ENCODE measurements at regions of chr20 and their contacts with region 1.

Region 1: DNA sequence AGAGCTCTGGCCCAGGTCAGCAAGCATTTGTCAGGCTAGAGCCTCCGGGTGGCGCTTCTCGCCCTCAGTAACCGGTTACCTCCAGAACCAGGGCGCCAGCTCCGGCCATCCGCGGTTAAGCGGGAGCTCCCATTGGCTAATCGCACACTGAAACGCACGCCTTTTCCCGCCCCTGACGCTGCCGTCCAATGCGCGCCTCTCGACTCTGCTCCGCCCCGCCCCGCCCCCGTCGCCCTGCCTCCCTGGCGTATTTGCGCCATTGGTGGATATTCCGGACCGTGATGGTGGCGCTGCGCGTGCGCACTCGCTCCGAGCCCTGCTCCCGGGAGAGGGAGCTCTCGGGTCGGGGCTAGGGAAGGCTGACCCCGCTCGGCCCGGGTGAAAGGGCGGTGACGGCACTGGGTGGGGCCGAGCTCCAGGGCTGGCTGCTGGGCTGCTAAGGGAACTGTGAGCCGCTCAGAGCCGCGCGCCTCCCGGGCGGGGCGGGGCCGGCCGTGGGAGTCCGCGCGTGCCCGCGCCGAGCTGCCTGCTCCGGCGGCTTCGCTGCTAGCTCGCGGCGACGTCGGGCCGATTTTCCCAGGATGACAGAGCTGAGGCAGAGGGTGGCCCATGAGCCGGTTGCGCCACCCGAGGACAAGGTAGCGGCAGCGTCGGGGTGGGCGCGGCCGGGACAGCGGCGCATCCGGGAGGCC is at the start of gene CDS2:
- DNase-seq: peak; percentile 100
- H3K4me3 ChIP-seq: peak within 1 kb of the TSS; percentile 76
- CTCF ChIP-seq: peak in 1 of 3 donors; percentile 36
- POLR2A ChIP-seq: no peak
- total RNA-seq, gene CDS2: 12.3 to 16.9 (median 14.7) TPM

Region 2: GRCh38 chr20:5109276-5109675 is 17.4 kb before region 1 on chr20:
- intact Hi-C with region 1: no loop called
- DNase-seq: no peak
- H3K4me3 ChIP-seq: no peak overlapping the region
- CTCF ChIP-seq: no peak
- POLR2A ChIP-seq: no peak

Region 3: DNA sequence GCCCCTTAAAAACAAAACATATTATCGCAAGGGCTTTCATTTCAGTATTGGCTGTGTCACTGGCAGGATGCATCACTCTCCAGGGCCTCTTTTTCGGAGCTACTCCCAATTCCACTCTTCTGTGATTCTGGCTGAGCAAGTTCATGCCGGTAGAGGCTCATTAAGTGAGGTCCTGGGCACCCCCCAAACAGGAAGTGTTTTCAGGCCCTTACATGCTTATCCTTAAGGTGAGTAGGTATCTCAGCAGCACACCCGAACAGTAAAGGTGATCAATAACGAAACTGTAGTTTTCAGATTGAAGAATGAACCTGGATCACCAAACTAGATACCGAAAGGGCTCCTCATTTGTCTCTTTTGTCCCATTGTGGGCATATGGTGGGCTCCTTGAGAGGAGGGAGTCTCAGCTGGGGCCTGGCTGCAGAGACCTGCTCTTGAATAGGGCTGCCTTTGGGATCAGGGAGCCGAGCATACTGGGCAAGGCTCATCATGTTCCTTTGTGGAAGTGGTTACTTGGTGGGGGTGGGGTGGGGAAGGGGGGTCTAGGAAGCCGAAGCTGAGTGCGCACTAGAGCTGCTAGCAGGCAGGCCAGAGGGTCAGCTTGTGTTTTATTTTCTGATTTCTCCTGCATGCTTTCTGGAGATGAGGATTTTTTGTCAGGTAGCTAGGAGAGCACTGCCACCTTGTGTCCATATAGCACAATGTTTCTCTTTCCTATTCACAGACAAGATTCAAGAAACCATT is 65.3 kb after region 1 on chr20:
- intact Hi-C with region 1: loop called (anchors 5 kb)
- DNase-seq: peak in 1 of 2 donors; percentile 84
- H3K4me3 ChIP-seq: no peak overlapping the region
- CTCF ChIP-seq: no peak
- POLR2A ChIP-seq: no peak

Measured in lower leg skin (tissue), 4 donors.